A673 (cell line): ENCODE measurements at regions of chr9 and their contacts with region 1.

Region 1: GRCh38 chr9:26892251-26893029 is at the start of gene CAAP1:
- DNase-seq: peak; percentile 91
- H3K4me3 ChIP-seq: peak within 1 kb of the TSS; percentile 92
- H3K27ac ChIP-seq: peak within 1 kb of the TSS; percentile 97
- H3K4me1 ChIP-seq: no peaks in the 10 kb centered on the region
- H3K27me3 ChIP-seq: no peaks in the 10 kb centered on the region
- CTCF ChIP-seq: peak; percentile 37; the same call in 1 of the 2 replicates
- total RNA-seq, gene CAAP1: 9.1 and 10.0 TPM in 2 replicates

Region 2: GRCh38 chr9:26706223-26706622 is 186.2 kb before region 1 on chr9:
- CTCF ChIA-PET with region 1: no interaction called
- POLR2A ChIA-PET with region 1: no interaction called
- intact Hi-C with region 1: no loop called
- DNase-seq: no peak
- H3K4me3 ChIP-seq: no peak overlapping the region
- H3K27ac ChIP-seq: no peak overlapping the region
- H3K4me1 ChIP-seq: no peaks in the 10 kb centered on the region
- H3K27me3 ChIP-seq: no peaks in the 10 kb centered on the region
- CTCF ChIP-seq: no peak

Region 3: GRCh38 chr9:26946753-26947727 is 54.6 kb after region 1 on chr9 and contains the start of gene PLAA:
- CTCF ChIA-PET with region 1: no interaction called
- POLR2A ChIA-PET with region 1: no interaction called
- intact Hi-C with region 1: loop called (anchors 1 kb)
- DNase-seq: peak; percentile 82
- H3K4me3 ChIP-seq: peak within 1 kb of the TSS; percentile 71
- H3K27ac ChIP-seq: peak within 1 kb of the TSS; percentile 98
- H3K4me1 ChIP-seq: no peaks in the 10 kb centered on the region
- H3K27me3 ChIP-seq: no peaks in the 10 kb centered on the region
- CTCF ChIP-seq: no peak
- total RNA-seq, gene PLAA: 35.4 and 36.4 TPM in 2 replicates

Region 4: GRCh38 chr9:27065288-27065687 is 172.8 kb after region 1 on chr9:
- CTCF ChIA-PET with region 1: no interaction called
- POLR2A ChIA-PET with region 1: no interaction called
- intact Hi-C with region 1: no loop called
- DNase-seq: no peak
- H3K4me3 ChIP-seq: no peak overlapping the region
- H3K27ac ChIP-seq: no peak overlapping the region
- H3K4me1 ChIP-seq: no peaks in the 10 kb centered on the region
- H3K27me3 ChIP-seq: no peaks in the 10 kb centered on the region
- CTCF ChIP-seq: no peak